Heart left ventricle (tissue), 16 donors: ENCODE measurements at regions of chr12 and their contacts with region 1.

Region 1: DNA sequence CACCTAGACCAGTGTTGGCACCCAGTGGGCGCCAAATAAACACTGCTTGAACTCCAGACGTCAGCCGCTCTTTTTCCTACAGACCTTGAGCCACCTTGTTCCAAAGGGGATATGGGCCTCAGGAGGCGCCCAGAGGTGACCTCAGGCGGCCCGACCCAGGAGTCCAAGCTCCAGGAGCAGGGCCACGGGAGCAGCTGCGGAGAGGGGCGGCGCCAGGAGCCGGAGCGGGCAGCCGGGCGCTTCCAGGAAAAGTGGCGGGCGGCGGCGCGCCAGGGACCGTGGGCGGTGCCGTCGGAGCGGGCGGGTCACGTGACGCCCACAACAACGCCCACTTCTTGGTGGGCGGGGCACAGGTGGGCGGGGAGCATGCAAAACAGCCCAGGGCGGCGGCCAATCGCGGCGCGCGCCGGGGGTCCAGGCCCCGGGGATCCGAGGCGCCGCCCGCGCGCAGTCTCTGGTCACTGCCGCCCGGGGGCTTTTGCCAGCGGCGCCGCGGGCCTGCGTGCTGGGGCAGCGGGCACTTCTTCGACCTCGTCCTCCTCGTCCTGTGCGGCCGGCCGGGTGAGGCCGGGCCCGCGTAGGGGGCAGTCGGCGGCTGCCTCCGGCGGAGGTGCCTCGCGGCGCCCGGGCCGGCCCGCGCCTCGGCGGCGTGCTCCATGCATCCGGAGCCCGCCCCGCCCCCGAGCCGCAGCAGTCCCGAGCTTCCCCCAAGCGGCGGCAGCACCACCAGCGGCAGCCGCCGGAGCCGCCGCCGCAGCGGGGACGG is at the start of gene ORAI1:
- DNase-seq: peak; percentile 96 to 99 (median 97)
- ATAC-seq: peak; percentile 91 to 97 (median 94)
- H3K4me3 ChIP-seq: peak within 1 kb of the TSS; percentile 38 to 89 (median 76)
- H3K27ac ChIP-seq: peak within 1 kb of the TSS; percentile 66 to 98 (median 90)
- H3K4me1 ChIP-seq: peaks cover 0 to 53% (median 30%) of the 10 kb centered on the region in 12 donors
- H3K27me3 ChIP-seq: no peaks in the 10 kb centered on the region
- CTCF ChIP-seq: peak in 3 of 12 donors; percentile 26 to 37 (median 37)
- POLR2A ChIP-seq: peak in 1 of 2 donors; percentile 72
- total RNA-seq, gene ORAI1: 6.9 to 15.7 (median 9.5) TPM

Region 2: GRCh38 chr12:121499929-121500793 is 126.1 kb before region 1 on chr12:
- intact Hi-C with region 1: loop called in 5 of 10 experiments (anchors 5 to 10 kb)
- DNase-seq: peak; percentile 70 to 87 (median 79)
- ATAC-seq: peak; percentile 81 to 90 (median 84)
- H3K4me3 ChIP-seq: peak overlapping the region in 9 of 12 donors; percentile 25 to 52 (median 38)
- H3K27ac ChIP-seq: peak overlapping the region; percentile 20 to 87 (median 72)
- H3K4me1 ChIP-seq: peaks cover 0 to 21% (median 9%) of the 10 kb centered on the region in 12 donors
- H3K27me3 ChIP-seq: no peaks in the 10 kb centered on the region
- CTCF ChIP-seq: peak in 11 of 12 donors; percentile 97 to 99 (median 99)
- POLR2A ChIP-seq: no peak

Region 3: GRCh38 chr12:121536899-121537813 is 89.1 kb before region 1 on chr12:
- intact Hi-C with region 1: loop called in 1 of 10 experiments (anchors 5 kb)
- DNase-seq: peak; percentile 92 to 94 (median 93)
- ATAC-seq: peak; percentile 68 to 87 (median 84)
- H3K4me3 ChIP-seq: peak overlapping the region; percentile 35 to 92 (median 78)
- H3K27ac ChIP-seq: peak overlapping the region; percentile 93 to 98 (median 96)
- H3K4me1 ChIP-seq: peaks cover 0 to 66% (median 49%) of the 10 kb centered on the region in 12 donors
- H3K27me3 ChIP-seq: no peaks in the 10 kb centered on the region
- CTCF ChIP-seq: peak in 1 of 12 donors; percentile 4
- POLR2A ChIP-seq: peak in 1 of 2 donors; percentile 63

Region 4: GRCh38 chr12:121550974-121551634 is 75.2 kb before region 1 on chr12:
- intact Hi-C with region 1: loop called (anchors 2 to 10 kb)
- DNase-seq: no peak
- ATAC-seq: no peak
- H3K4me3 ChIP-seq: no peak overlapping the region
- H3K27ac ChIP-seq: no peak overlapping the region
- H3K4me1 ChIP-seq: peaks cover 0 to 15% (median 0%) of the 10 kb centered on the region in 12 donors
- H3K27me3 ChIP-seq: no peaks in the 10 kb centered on the region
- CTCF ChIP-seq: no peak
- POLR2A ChIP-seq: no peak

Region 5: GRCh38 chr12:121579981-121580868 is 46.0 kb before region 1 on chr12:
- intact Hi-C with region 1: loop called in 5 of 10 experiments (anchors 2 to 5 kb)
- DNase-seq: peak; percentile 69 to 87 (median 77)
- ATAC-seq: peak; percentile 28 to 77 (median 69)
- H3K4me3 ChIP-seq: peak overlapping the region; percentile 61 to 81 (median 74)
- H3K27ac ChIP-seq: peak overlapping the region; percentile 17 to 91 (median 84)
- H3K4me1 ChIP-seq: peaks cover 0 to 58% (median 31%) of the 10 kb centered on the region in 12 donors
- H3K27me3 ChIP-seq: no peaks in the 10 kb centered on the region
- CTCF ChIP-seq: no peak
- POLR2A ChIP-seq: no peak

Region 6: DNA sequence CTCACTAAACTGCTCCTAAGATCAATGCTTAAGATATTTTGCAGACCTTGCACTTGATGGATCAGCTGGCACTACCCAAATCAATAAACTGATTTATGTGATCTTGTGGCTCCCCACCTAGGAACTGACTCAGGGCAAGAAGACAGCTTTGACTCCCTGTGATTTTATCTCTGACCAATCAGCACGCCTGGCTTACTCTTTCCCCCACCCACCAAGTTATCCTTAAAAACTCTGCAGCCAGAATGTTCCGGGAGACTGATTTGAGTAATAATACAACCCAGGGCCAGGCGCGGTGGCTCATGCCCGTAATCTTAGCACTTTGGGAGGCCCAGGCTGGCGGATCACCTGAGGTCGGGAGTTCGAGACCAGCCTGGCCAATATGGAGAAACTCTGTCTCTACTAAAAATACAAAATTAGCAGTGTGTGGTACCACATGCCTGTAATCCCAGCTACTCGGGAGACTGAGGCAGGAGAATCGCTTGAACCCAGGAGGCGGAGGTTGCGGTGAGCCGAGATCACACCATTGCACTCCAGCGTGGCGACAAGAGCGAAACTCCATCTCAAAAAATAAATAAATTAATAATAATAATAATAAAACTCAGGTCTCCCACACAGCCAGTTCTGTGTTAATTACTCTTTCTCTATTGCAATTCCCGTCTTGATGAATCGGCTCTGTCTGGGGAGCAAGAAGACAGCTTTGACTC is 31.2 kb after region 1 on chr12:
- intact Hi-C with region 1: loop called in 1 of 10 experiments (anchors 2 kb)
- DNase-seq: no peak
- ATAC-seq: no peak
- H3K4me3 ChIP-seq: no peak overlapping the region
- H3K27ac ChIP-seq: peak overlapping the region in 3 of 12 donors; percentile 69 to 93 (median 91)
- H3K4me1 ChIP-seq: peaks cover 0 to 22% (median 5%) of the 10 kb centered on the region in 12 donors
- H3K27me3 ChIP-seq: no peaks in the 10 kb centered on the region
- CTCF ChIP-seq: no peak
- POLR2A ChIP-seq: no peak

Region 7: GRCh38 chr12:121668750-121669520 is 42.7 kb after region 1 on chr12:
- intact Hi-C with region 1: loop called in 7 of 10 experiments (anchors 5 to 10 kb)
- DNase-seq: peak in 1 of 5 donors; percentile 32
- ATAC-seq: no peak
- H3K4me3 ChIP-seq: no peak overlapping the region
- H3K27ac ChIP-seq: no peak overlapping the region
- H3K4me1 ChIP-seq: peaks cover 0 to 18% (median 8%) of the 10 kb centered on the region in 12 donors
- H3K27me3 ChIP-seq: no peaks in the 10 kb centered on the region
- CTCF ChIP-seq: peak; percentile 43 to 73 (median 56)
- POLR2A ChIP-seq: no peak